Endothelial cell of umbilical vein (primary cell): ENCODE measurements at regions of chr10 and their contacts with region 1.

Region 1: DNA sequence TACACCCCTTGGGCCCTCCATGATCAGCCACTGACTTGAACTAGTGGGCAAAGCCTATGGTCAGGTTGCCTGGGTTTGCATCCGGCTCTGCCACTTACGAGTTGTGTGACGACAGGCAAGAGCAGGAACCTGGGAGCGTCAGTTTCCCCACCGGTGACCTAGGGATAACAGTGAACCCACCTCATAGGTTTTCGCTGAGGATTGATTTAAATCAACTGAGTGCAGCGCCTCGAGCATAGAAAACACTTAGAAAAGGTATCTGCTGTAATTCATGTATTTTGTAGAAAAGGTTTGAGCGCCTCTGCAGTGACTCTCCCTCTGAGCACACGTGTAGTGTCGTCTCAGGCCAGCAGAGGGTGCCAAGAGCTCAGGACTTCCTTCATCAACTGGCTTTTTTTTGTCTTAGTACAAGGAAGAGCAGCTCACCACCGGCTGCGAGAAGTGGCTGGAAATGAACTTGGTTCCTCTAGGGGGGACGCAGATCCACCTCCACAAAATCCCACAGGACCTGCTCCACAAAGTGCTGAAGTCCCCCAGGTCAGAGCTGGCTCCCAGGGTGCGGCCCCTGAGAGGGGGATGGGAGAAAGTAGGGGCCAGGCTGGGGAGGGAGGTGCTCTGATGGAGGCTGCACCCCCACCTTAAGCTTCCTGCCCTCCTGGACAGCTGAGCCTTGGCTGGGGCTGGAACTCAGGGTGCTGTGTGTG is 27.7 kb downstream of the BTBD16 start:
- DNase-seq: peak; percentile 85
- H3K4me3 ChIP-seq: no peak overlapping the region
- H3K27ac ChIP-seq: no peak overlapping the region
- H3K4me1 ChIP-seq: no peaks in the 10 kb centered on the region
- H3K27me3 ChIP-seq: no peaks in the 10 kb centered on the region
- CTCF ChIP-seq: peak; percentile 81 to 96
- POLR2A ChIP-seq: no peak

Region 2: DNA sequence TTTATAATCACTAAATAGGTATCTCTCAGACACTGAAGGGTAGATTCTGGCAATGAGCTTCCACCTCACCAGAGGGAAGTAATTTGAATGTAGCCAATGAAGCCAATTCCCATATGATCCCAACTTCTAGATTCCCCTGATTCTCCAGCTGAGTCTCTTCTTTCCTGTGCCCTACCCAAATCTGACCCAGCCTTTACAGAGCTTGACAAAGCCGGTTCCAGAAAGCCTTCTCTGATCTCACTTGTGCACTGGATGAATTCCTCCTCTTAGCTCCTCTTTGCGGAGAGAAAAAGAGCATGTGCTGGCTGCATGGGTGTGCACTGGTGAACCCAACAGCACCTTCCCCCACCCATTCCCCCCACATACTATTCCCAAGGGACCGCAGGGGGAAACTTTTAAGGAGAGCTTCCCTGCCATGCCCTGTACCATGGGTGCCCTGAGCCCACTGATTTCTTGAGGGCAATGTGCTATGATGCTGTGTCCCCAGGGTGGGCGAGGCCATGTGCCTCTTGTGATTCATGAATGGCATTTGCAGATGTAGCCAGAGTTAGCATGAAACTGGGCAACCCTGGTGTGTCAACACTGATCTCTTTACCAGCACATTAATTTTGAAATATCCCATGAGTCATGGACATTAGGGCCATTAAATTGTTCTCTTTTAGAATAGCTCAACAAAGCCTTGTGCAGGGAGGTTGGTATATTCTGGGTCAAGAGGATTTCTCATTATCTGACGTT is 25.4 kb after region 1 on chr10:
- CTCF ChIA-PET with region 1: interaction called, 15 read pairs
- POLR2A ChIA-PET with region 1: no interaction called
- dilution Hi-C with region 1: no loop called
- intact Hi-C with region 1: no loop called
- DNase-seq: no peak
- H3K4me3 ChIP-seq: no peak overlapping the region
- H3K27ac ChIP-seq: no peak overlapping the region
- H3K4me1 ChIP-seq: no peaks in the 10 kb centered on the region
- H3K27me3 ChIP-seq: no peaks in the 10 kb centered on the region
- CTCF ChIP-seq: no peak
- POLR2A ChIP-seq: no peak

Region 3: GRCh38 chr10:122374237-122374869 is 75.6 kb after region 1 on chr10 and contains the start of gene PLEKHA1:
- CTCF ChIA-PET with region 1: interaction called, 27 read pairs
- POLR2A ChIA-PET with region 1: no interaction called
- dilution Hi-C with region 1: no loop called
- intact Hi-C with region 1: loop called (anchors 2 kb)
- DNase-seq: peak; percentile 96
- H3K4me3 ChIP-seq: peak within 1 kb of the TSS; percentile 85 to 93 (median 89)
- H3K27ac ChIP-seq: peak within 1 kb of the TSS; percentile 84
- H3K4me1 ChIP-seq: peaks cover 15% of the 10 kb centered on the region
- H3K27me3 ChIP-seq: no peaks in the 10 kb centered on the region
- CTCF ChIP-seq: no peak
- POLR2A ChIP-seq: peak; percentile 56
- total RNA-seq, gene PLEKHA1: 58.0 and 58.8 TPM in 2 replicates

Region 4: DNA sequence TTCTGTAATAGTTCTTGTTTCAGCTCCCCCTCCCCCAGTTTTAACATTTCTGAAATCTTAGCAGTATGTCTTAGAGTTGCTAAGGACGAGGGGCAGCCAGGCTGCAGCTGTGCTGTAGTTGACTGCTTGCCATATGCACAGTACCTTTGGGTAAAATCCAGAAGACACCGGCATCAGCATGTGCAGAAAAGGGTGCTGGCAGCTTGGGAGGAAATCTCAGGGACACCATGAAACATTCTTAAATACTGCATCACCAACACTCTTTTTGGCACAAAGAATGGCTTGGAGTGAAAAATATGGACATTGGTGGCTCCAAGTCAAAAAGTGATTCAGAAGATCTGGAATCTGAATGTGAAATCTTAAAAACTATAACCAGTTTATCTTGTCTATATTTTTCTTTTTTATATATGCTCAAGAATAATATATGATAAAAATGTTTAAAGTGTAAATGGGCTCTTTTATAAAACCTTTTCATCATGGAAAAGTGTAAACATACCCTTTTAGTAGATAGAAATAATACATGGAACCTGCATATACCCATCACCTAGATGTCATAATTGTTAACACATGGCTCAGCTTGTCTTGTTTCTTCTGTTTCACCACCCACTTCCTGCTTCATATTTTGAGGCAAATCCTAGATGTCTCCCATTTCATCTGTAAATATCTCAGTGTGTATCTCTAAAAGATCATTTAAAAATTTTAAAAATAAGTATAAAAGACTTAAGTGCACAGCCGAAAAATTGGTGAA is 121.3 kb after region 1 on chr10:
- CTCF ChIA-PET with region 1: interaction called, 11 read pairs
- POLR2A ChIA-PET with region 1: no interaction called
- dilution Hi-C with region 1: loop called (anchors 25 kb)
- intact Hi-C with region 1: no loop called
- DNase-seq: no peak
- H3K4me3 ChIP-seq: no peak overlapping the region
- H3K27ac ChIP-seq: no peak overlapping the region
- H3K4me1 ChIP-seq: no peaks in the 10 kb centered on the region
- H3K27me3 ChIP-seq: no peaks in the 10 kb centered on the region
- CTCF ChIP-seq: no peak
- POLR2A ChIP-seq: no peak

Region 5: DNA sequence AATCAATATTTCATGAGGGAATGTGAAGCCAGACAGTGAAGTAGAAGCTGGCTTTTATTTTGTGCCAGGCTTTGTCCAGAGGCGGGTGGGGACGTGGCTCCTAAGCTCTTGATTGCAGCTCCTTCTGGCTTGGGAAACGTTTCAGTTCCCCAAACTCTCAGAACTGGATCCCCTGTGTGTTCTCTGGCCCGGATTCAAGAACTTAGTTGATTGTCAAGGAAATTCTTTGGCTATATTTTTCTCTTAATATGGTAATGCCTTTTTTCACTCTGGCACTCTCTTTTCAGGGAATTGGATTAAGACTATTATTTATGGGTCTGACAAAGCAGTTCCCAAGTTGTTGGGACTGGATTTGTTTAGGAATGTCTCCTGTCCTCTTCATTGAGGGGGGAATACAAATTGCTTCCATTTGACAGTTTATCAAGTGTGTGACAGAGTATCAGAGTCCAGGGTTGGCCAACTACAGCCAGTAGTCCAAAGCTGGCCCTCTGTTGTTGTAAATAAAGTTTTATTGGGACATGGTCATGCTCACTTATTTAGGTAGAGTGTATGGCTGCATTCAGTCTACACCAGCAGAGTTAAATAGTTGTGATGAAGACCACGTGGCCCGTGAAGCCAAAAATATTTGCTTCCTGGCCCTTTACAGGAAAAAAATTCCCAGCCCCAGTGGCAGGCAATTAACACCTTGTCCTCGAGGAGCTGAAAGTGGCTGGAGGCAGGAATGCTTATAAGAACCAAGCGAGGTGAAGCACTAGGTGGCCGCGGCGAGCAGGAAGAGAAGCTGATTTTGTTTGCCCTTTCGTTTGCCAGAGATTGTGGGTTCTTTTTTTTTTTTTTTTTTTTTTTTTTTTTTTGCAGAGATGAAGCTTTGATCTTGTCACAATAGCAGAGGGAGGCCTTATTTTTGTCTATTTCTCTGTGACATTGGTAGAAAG is 196.9 kb after region 1 on chr10:
- CTCF ChIA-PET with region 1: interaction called, 11 read pairs
- POLR2A ChIA-PET with region 1: no interaction called
- dilution Hi-C with region 1: no loop called
- intact Hi-C with region 1: loop called (anchors 1 kb)
- DNase-seq: peak; percentile 72
- H3K4me3 ChIP-seq: peak overlapping the region in 1 of 3 experiments; percentile 32
- H3K27ac ChIP-seq: peak overlapping the region; percentile 91
- H3K4me1 ChIP-seq: peaks cover 32% of the 10 kb centered on the region
- H3K27me3 ChIP-seq: no peaks in the 10 kb centered on the region
- CTCF ChIP-seq: no peak
- POLR2A ChIP-seq: no peak